Testis (tissue), 5 donors: ENCODE measurements at regions of chr20 and their contacts with region 1.

Region 1: DNA sequence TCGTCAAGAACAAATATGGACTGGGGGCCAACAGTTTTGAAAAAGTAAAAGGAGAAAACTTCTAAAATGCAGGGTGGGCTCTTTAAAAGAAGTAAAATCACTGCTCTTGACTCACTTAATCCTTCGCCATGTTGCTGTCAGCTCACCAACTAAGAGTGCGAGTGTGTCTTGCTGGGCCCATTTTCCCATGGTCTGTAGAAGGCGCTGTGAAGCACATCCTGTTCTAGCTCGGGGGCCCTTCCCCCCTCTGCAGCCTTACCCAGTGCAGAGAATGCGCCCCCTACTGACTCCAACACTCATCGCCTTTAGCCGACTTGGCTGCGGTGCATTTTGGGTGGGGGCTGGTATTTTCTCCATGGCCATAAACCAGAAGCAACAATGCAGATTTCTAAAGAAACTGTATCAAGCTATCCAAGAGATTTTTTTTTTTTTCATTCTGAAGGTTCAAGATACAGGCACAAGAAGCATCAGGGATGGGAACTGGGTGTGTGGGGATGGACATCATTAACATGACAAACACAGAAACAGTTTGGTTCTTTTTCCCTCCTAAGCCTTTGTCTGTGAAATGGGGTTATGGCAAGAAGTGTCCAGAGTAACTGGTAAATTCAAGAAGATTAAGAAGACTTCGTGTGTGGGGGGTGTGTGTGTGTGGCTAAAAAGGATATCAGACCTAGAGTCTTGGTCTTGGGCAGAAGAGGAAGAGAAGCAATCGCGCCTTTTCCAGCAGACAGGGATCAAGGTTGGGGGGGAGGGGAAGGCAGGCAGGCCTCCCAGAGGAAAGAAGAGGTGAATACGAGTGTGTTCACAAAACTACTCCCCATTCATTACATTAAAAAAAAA is 1.7 kb downstream of the ADNP start:
- DNase-seq: peak; percentile 97
- H3K4me3 ChIP-seq: peak overlapping the region; percentile 83 to 86
- H3K27ac ChIP-seq: peak overlapping the region; percentile 84 to 97
- H3K4me1 ChIP-seq: peaks cover 19% of the 10 kb centered on the region
- H3K27me3 ChIP-seq: no peaks in the 10 kb centered on the region
- CTCF ChIP-seq: peak; percentile 82 to 92 (median 90)
- POLR2A ChIP-seq: no peak

Region 2: GRCh38 chr20:50790651-50791277 is 138.8 kb before region 1 on chr20:
- intact Hi-C with region 1: loop called (anchors 10 kb)
- DNase-seq: peak; percentile 88
- H3K4me3 ChIP-seq: no peak overlapping the region
- H3K27ac ChIP-seq: peak overlapping the region; percentile 86 to 96
- H3K4me1 ChIP-seq: peaks cover 25% of the 10 kb centered on the region
- H3K27me3 ChIP-seq: no peaks in the 10 kb centered on the region
- CTCF ChIP-seq: peak; percentile 54 to 69 (median 66)
- POLR2A ChIP-seq: no peak